HepG2 (cell line): ENCODE measurements at regions of chr9 and their contacts with region 1.

Region 1: DNA sequence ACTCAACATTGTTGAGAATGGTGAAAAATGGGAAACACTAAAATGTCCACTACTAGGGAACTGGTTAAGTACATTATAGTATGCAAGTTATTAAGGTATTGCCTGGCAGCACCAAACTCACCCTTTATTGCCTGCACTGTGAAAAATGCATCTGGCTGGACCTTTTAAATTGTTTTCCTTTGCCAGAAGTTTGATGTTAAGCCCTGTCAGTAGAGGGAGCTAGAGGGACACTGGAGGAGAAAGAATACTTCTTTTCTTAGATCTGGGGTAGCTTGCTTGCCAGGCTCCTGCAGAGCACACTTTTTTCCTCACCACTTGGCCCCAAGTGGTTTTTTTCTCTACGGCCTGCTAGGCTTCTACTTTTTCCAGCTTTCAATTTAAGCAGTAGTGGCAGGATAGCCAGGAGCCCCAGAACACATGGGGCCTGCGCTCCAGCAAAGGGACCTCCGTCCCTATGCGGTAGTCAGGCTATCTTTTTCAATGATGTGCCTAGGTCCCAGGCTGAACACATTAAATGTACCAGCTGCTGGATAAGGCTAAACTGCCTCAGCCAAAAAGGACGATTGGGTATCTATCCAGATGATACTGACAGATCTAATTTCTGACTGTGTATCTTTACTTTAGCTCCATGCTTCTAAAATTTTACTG is 8.0 kb upstream of the HABP4 start:
- DNase-seq: peak; percentile 68
- ATAC-seq: peak; percentile 57
- H3K4me3 ChIP-seq: no peak overlapping the region
- H3K27ac ChIP-seq: no peak overlapping the region
- H3K4me1 ChIP-seq: peaks cover 40% of the 10 kb centered on the region
- H3K27me3 ChIP-seq: no peaks in the 10 kb centered on the region
- CTCF ChIP-seq: peak; percentile 82
- EP300 ChIP-seq: no peak
- POLR2A ChIP-seq: no peak
- RAD21 ChIP-seq: peak; percentile 60

Region 2: DNA sequence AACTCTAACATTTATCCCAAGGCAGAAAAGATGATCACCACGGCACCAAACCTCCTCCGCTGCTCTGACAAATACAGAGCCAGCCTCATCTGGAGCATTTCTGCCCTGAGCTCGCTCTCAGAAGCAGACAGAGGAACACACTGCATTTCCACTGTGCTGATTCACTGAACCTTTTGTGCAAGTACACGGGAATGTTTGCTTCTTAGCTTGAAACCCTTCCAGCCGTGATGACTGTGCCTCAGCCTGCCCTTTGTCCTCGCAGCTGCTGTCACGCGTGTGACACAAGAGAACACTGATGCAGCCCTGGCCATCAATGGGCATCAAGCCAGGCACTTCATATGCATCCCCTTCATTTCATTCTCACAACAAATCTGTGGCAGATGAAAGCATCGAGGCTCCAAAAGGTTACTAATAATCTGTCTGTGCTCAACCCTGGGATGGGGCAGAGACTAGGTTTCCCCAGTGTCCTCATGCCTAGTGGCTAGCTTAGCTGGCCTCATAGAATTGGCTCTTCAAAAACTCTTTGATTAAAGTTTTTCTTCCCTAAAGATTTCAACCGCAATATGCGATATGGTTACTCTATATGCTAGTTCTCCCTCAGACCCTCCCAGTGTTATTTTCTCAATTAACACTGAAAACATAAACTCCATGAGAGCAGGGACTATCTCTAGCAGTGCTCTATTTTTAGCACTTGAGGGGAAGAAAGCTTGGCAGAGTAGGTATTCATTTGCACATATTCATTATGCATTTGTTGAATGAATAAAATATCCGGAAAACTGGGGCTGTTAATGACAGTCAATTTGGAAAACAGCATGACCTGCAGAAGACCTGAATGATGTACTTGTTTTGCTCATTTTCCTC is 170.4 kb after region 1 on chr9:
- CTCF ChIA-PET with region 1: no interaction called
- POLR2A ChIA-PET with region 1: no interaction called
- in situ Hi-C with region 1: no loop called
- intact Hi-C with region 1: no loop called
- DNase-seq: peak; percentile 84
- ATAC-seq: peak; percentile 96
- H3K4me3 ChIP-seq: peak overlapping the region in 2 of 3 experiments; percentile 11 to 32; a peak in 3 of 6 replicates
- H3K27ac ChIP-seq: peak overlapping the region; percentile 54
- H3K4me1 ChIP-seq: peaks cover 67% of the 10 kb centered on the region
- H3K27me3 ChIP-seq: no peaks in the 10 kb centered on the region
- CTCF ChIP-seq: no peak
- EP300 ChIP-seq: peak; percentile 50 to 63; a peak in 2 of 4 replicates
- POLR2A ChIP-seq: peak in 1 of 2 experiments; percentile 58; a peak in 2 of 4 replicates
- RAD21 ChIP-seq: no peak

Region 3: DNA sequence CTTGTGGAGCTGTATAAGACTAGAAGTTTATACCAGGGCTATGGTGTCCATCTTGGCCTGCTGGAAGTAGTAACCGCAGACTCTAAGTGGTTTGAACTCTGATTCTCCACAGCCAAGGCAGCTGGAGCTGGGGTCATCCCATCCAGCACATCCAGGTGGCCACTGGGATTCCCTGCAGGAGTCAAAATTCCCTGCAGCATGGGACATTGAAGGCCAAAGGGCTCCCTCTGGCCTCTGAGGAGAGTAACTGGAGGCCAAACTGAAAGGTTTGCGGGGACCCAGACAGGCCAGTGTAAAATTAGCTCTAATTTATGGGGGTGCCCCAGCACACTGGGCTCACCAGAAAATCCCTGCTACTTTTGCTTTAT is 225.4 kb after region 1 on chr9:
- CTCF ChIA-PET with region 1: interaction called, 9 read pairs
- POLR2A ChIA-PET with region 1: interaction called, 4 read pairs
- in situ Hi-C with region 1: no loop called
- intact Hi-C with region 1: loop called (anchors 2 kb)
- DNase-seq: no peak
- ATAC-seq: peak; percentile 57
- H3K4me3 ChIP-seq: no peak overlapping the region
- H3K27ac ChIP-seq: no peak overlapping the region
- H3K4me1 ChIP-seq: peaks cover 35% of the 10 kb centered on the region
- H3K27me3 ChIP-seq: no peaks in the 10 kb centered on the region
- CTCF ChIP-seq: peak; percentile 39; the same call in 1 of the 2 replicates
- EP300 ChIP-seq: no peak
- POLR2A ChIP-seq: no peak
- RAD21 ChIP-seq: no peak